OCI-LY7 (cell line): ENCODE measurements at regions of chr9 and their contacts with region 1.

Region 1: DNA sequence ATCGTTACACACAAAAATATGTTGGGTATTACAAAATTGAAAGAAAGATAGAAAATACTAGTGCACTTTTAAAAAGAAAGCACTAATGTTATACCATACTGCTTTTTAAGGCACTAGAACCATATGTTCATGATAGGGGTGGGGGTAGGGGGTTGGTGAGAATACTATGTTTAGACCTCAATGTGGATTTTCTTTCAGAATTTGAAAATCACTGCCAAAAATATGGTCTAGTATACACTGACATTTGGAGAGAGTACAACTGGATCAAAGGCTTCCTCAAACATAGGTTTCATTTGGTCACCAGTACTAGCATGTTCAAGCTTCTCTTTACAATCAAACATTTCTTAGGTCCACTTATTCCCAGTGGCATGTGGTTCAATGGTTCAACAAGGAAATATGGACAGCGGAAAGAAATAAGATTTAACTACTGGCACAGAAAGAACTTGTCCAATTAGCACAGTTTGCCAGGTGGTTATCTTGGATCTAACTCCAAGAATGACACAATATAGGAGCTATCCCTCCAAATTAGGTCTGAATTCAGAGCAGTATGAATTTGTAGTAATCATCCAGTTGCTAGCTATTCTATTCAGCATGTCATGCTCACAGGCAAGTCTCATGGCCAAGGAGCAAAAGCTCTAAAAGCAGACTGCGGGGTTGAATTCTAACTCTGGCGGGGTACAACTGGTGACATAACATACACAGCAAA is 139.3 kb downstream of the SLC24A2 start:
- DNase-seq: no peak
- H3K4me3 ChIP-seq: no peak overlapping the region
- H3K27ac ChIP-seq: no peak overlapping the region
- H3K4me1 ChIP-seq: no peaks in the 10 kb centered on the region
- CTCF ChIP-seq: no peak

Region 2: GRCh38 chr9:18824095-18824666 is 825.3 kb before region 1 on chr9:
- CTCF ChIA-PET with region 1: no interaction called
- POLR2A ChIA-PET with region 1: interaction called, 11 read pairs
- intact Hi-C with region 1: no loop called
- DNase-seq: no peak
- H3K4me3 ChIP-seq: no peak overlapping the region
- H3K27ac ChIP-seq: no peak overlapping the region
- H3K4me1 ChIP-seq: no peaks in the 10 kb centered on the region
- CTCF ChIP-seq: no peak

Region 3: GRCh38 chr9:19533373-19533772 is 116.1 kb before region 1 on chr9:
- CTCF ChIA-PET with region 1: no interaction called
- POLR2A ChIA-PET with region 1: no interaction called
- intact Hi-C with region 1: no loop called
- DNase-seq: no peak
- H3K4me3 ChIP-seq: no peak overlapping the region
- H3K27ac ChIP-seq: no peak overlapping the region
- H3K4me1 ChIP-seq: no peaks in the 10 kb centered on the region
- CTCF ChIP-seq: no peak

Region 4: GRCh38 chr9:19551124-19551929 is 98.2 kb before region 1 on chr9:
- CTCF ChIA-PET with region 1: no interaction called
- POLR2A ChIA-PET with region 1: no interaction called
- intact Hi-C with region 1: no loop called
- DNase-seq: no peak
- H3K4me3 ChIP-seq: no peak overlapping the region
- H3K27ac ChIP-seq: no peak overlapping the region
- H3K4me1 ChIP-seq: no peaks in the 10 kb centered on the region
- CTCF ChIP-seq: no peak